Activated CD8-positive, alpha-beta memory T cell treated with anti-CD3 and anti-CD28 coated beads, Interleukin-2, amount 10 ng/mL, durations not matched to agents 7 days and 5 days (primary cell): ENCODE measurements at regions of chr20 and their contacts with region 1.

Region 1: DNA sequence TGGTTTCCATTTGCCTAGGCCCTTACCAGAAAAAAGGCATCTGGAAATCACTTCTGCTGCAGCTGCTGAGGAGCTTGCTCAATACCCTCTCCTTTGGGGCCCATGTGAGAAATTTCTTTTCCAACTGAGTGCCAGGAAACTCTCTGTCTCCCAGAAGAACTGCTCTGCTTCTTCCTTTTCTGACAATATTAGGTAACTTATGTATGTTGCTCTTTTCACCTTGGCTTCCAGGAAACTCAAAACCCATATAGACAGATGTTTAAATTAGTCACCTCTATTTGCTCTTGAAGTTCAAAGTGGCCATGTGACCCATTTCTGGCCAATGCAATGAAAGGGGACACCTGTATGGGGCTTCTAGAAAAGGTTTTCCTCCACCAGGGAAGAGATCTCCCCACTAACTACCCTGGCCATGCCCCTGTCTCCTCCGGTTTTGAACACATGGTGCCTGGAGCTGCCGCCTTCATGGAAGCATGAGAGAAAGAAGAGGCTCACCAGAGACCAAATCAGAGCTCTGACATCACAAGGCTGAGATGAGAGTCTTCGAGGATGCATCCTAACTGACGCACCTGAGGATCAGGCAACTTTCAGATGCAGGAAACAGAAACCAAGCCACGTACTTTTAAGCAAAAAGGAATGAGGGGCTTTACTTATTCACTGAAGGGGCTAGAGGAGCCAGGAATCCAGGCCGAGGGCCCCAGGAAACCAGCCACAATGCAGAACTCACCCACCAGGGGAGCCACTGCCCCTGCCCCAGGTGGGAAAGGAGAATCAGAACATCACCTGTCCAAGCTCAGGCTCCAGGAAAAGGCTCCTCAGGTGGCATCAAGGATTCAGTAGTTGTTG is 121.4 kb downstream of the PREX1 start:
- DNase-seq: no peak
- ATAC-seq: peak; percentile 16
- H3K4me3 Mint-ChIP-seq: no peak overlapping the region
- H3K27ac Mint-ChIP-seq: peak overlapping the region; percentile 75
- H3K4me1 Mint-ChIP-seq: peaks cover 50% of the 10 kb centered on the region
- H3K27me3 Mint-ChIP-seq: no peaks in the 10 kb centered on the region

Region 2: DNA sequence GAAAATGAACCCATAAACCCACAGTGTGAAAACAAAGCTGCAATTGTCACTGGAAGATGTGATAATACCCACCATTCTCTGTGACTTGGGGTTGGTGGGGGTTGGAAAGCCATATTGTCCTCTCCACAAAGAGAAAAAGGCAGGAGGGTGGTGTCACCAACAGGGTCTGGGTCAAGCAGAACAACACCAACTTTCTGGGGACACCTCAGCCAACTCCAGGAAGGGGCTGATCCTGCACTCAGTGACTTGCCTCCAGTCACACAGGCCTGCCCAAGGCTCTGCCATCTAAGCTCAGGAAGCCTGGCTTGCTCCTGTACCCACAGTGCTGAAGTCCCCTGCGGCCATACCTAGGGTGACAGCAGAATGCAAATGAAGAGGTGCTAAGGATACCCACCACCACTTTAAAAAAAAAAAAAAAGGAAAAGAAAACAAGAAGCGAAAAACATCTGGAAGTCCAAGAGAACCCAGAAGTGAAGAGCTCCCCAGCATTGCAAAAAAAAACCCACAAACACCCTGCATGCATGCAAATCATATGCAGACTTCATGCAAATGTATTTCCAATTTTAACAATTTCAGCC is 10.8 kb after region 1 on chr20:
- CTCF ChIA-PET with region 1: interaction called, 14 read pairs
- DNase-seq: peak; percentile 54
- ATAC-seq: peak; percentile 26
- H3K4me3 Mint-ChIP-seq: peak overlapping the region; percentile 34
- H3K27ac Mint-ChIP-seq: peak overlapping the region; percentile 97
- H3K4me1 Mint-ChIP-seq: peaks cover 94% of the 10 kb centered on the region
- H3K27me3 Mint-ChIP-seq: no peaks in the 10 kb centered on the region

Region 3: GRCh38 chr20:48733296-48733887 is 27.0 kb after region 1 on chr20:
- CTCF ChIA-PET with region 1: no interaction called
- DNase-seq: no peak
- ATAC-seq: no peak
- H3K4me3 Mint-ChIP-seq: no peak overlapping the region
- H3K27ac Mint-ChIP-seq: no peak overlapping the region
- H3K4me1 Mint-ChIP-seq: peaks cover 74% of the 10 kb centered on the region
- H3K27me3 Mint-ChIP-seq: no peaks in the 10 kb centered on the region